ENCODE measurements at regions of chr5 and their contacts with region 1.

Region 1: DNA sequence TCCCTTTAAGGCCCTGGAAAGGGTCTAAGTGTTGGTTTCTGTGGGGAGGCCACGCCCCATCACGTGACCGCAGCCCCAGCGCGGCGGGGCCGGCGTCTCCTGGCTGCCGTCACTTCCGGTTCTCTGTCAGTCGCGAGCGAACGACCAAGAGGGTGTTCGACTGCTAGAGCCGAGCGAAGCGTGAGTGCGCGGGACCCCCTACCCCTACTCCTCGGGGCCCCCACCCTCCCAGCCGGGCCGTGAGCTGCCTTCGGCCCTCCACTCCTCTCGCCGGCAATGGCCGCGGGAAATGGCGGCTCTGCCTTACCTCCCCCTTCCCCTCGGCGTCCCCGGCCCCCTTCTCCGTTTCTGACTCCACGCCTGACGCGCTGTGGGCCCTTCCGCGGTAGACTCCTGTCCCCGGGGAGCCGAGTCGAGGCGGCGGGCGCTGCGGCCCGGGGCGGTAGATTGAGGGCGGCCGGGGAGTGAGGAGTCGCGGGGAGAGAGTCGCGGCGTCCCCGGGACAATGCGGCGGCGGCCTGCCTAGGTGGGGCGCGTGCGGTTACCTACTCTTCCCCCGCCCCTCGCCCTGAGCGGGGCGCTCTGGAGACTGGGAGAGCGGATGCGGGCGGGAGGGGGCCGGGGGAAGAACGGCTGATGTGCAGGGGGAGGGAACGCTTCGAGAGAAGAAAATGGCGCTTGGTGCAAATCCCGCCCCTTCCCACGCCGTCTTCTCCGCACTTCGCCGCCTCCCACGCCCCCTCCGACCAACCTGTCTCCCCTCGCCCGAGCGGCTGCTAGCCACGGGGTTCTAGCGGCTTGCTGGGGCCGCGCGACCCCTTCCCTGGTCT is at the start of gene SUB1:
- DNase-seq: peak; percentile 47
- H3K4me3 ChIP-seq: peak within 1 kb of the TSS; percentile 97
- H3K27me3 ChIP-seq: no peaks in the 10 kb centered on the region
- CTCF ChIP-seq: peak; percentile 24; the same call in 1 of the 2 replicates
- polyA plus RNA-seq, gene SUB1: 46.8 and 152 TPM in 2 replicates

Region 2: GRCh38 chr5:32475334-32476097 is 110.1 kb before region 1 on chr5:
- CTCF ChIA-PET with region 1: interaction called, 10 read pairs
- POLR2A ChIA-PET with region 1: no interaction called
- DNase-seq: no peak
- H3K4me3 ChIP-seq: no peak overlapping the region
- H3K27me3 ChIP-seq: no peaks in the 10 kb centered on the region
- CTCF ChIP-seq: no peak

Region 3: DNA sequence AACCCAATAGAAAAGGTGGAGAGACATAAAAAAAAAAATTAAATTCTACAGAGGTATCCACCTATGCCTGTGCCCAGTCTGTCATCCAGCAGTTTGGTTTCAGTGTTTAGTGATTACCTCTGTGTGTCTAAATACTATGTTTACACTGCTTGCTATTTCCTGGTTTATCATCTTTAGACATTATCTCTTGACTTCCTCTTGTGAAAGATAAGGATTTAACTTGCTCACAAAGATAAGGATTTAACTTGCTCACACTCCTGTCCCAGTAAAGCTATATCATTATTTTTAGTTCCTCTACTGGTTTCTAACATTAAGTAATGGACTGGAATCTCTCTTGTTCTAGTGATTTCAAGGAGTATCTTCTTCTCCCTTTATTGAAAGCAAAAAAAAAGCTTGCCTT is 87.2 kb before region 1 on chr5:
- CTCF ChIA-PET with region 1: interaction called, 15 read pairs
- POLR2A ChIA-PET with region 1: no interaction called
- DNase-seq: no peak
- H3K4me3 ChIP-seq: no peak overlapping the region
- H3K27me3 ChIP-seq: no peaks in the 10 kb centered on the region
- CTCF ChIP-seq: no peak

Region 4: DNA sequence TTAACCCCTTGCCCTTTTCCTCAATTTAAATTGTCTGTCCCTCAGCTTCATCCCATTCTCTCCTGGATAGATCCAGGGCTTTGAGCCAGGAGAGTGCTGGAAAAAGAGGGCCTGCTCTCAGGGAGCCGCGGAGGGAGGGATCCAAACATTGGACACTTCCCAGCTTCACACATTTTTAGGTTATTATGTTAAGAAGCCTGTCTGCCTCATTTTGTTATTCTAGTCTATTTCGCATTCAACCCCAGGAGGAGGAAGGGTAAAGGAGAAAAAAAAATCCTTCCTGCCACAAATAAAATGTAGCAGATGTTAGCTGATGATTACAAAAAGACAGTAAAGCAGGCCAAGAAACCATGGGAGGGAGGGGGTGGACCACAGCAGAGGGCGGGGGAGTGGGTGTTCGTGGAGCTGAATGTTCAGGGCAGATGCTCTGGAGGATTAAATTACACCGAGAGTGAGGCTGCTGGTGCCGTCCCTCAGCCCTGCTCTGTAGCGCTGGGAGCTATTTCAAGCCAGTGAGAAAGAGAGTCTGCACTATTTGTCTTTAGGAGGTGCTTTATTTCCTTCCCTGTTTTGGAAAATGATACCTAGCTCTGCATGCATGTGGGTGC is 80.6 kb before region 1 on chr5:
- CTCF ChIA-PET with region 1: interaction called, 22 read pairs
- POLR2A ChIA-PET with region 1: no interaction called
- DNase-seq: peak; percentile 97
- H3K4me3 ChIP-seq: no peak overlapping the region
- H3K27me3 ChIP-seq: no peaks in the 10 kb centered on the region
- CTCF ChIP-seq: no peak

Measured in BJ (cell line).